ENCODE measurements at regions of chr1 and their contacts with region 1.

Region 1: GRCh38 chr1:1273512-1274298 is at the start of gene UBE2J2:
- DNase-seq: peak; percentile 83 to 92 (median 90)
- ATAC-seq: peak; percentile 99
- H3K4me3 ChIP-seq: peak within 1 kb of the TSS; percentile 77
- H3K4me3 Mint-ChIP-seq: peak within 1 kb of the TSS; percentile 79 to 92 (median 88)
- H3K27ac ChIP-seq: peak within 1 kb of the TSS; percentile 90
- H3K27ac Mint-ChIP-seq: peak within 1 kb of the TSS; percentile 36 to 94 (median 83)
- H3K4me1 ChIP-seq: peaks cover 28 to 39% of the 10 kb centered on the region in 2 donors
- H3K4me1 Mint-ChIP-seq: peaks cover 21 to 45% (median 35%) of the 10 kb centered on the region in 7 donors
- H3K27me3 ChIP-seq: no peaks in the 10 kb centered on the region
- H3K27me3 Mint-ChIP-seq: no peaks in the 10 kb centered on the region
- total RNA-seq, gene UBE2J2: 62.3 to 89.3 (median 75.1) TPM

Region 2: DNA sequence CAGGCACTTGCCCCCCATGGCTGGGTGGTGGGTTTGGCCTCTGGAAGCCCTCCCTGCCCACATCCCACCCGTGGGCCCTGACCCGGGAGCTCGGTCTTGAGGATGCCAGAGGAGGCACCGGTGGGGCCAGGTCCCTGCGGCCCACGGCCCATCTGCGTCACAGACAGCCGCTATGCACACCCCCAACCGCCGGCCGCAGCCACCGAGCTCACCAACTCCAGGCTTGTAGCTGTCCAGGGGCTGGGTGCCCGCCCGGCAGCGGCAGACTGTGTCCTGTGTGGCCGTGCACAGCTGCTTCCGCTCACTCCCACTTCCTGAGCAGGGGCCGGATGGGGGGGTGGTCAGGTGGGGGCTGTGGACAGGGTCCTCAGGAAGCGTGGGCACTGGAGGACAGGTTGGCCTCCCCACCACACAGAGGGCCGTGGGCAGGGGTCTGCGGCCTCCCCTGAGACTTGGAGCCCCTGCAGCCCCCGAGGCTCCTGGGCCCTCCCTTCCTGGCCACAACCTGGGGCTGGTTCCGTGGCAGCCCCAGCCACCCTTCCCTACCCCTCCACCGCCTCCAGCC is 60.8 kb before region 1 on chr1:
- CTCF ChIA-PET with region 1: no interaction called
- POLR2A ChIA-PET with region 1: no interaction called
- intact Hi-C with region 1: loop called in 1 of 2 experiments (anchors 5 kb)
- DNase-seq: peak in 2 of 9 donors; percentile 11 to 71
- ATAC-seq: peak; percentile 50
- H3K4me3 ChIP-seq: peak overlapping the region; percentile 43
- H3K4me3 Mint-ChIP-seq: peak overlapping the region in 4 of 10 donors; percentile 23 to 78 (median 69)
- H3K27ac ChIP-seq: peak overlapping the region; percentile 50
- H3K27ac Mint-ChIP-seq: peak overlapping the region in 1 of 9 donors; percentile 62
- H3K4me1 ChIP-seq: peaks cover 17 to 27% of the 10 kb centered on the region in 2 donors
- H3K4me1 Mint-ChIP-seq: peaks cover 6 to 44% (median 29%) of the 10 kb centered on the region in 7 donors
- H3K27me3 ChIP-seq: no peaks in the 10 kb centered on the region
- H3K27me3 Mint-ChIP-seq: no peaks in the 10 kb centered on the region

Region 3: DNA sequence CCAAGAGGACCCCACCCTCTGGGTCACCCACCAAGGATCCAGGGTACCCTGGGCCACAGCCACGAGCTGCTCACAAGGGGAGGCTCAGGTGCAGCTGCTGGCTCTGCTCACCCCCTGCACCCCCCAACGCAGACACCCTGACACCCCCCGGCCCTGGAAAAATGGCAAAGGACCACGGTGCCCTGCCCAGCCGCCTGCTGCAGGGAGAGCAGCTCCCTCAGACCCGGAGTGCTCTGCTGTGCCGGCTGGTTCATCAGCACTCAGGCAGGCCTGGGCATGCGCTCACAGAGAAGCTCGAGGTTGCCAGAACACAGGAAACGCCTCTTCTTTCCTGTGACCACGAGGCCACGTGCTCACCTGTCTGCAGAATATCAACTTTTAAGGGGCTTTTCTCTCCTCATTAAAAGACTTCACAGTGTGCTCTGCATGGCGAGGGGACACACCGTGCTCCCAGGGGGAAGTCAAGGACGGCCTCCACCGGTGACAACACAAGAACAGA is 22.9 kb before region 1 on chr1:
- CTCF ChIA-PET with region 1: no interaction called
- POLR2A ChIA-PET with region 1: interaction called, 5 read pairs
- intact Hi-C with region 1: loop called in 1 of 2 experiments (anchors 2 kb)
- DNase-seq: peak in 8 of 9 donors; percentile 39 to 79 (median 67)
- ATAC-seq: peak; percentile 95
- H3K4me3 ChIP-seq: peak overlapping the region; percentile 14
- H3K4me3 Mint-ChIP-seq: peak overlapping the region; percentile 33 to 82 (median 74)
- H3K27ac ChIP-seq: peak overlapping the region; percentile 69
- H3K27ac Mint-ChIP-seq: peak overlapping the region; percentile 40 to 96 (median 91)
- H3K4me1 ChIP-seq: peaks cover 10 to 12% of the 10 kb centered on the region in 2 donors
- H3K4me1 Mint-ChIP-seq: peaks cover 4 to 29% (median 11%) of the 10 kb centered on the region in 7 donors
- H3K27me3 ChIP-seq: no peaks in the 10 kb centered on the region
- H3K27me3 Mint-ChIP-seq: peaks cover 0 to 3% (median 0%) of the 10 kb centered on the region in 5 donors

Region 4: GRCh38 chr1:1324521-1325287 is 51.0 kb after region 1 on chr1 and contains the starts of genes CPTP and INTS11:
- CTCF ChIA-PET with region 1: no interaction called
- POLR2A ChIA-PET with region 1: interaction called, 4 read pairs
- intact Hi-C with region 1: loop called in 1 of 2 experiments (anchors 2 kb)
- DNase-seq: peak; percentile 93 to 97 (median 95)
- ATAC-seq: peak; percentile 93
- H3K4me3 ChIP-seq: peak within 1 kb of the TSS; percentile 77
- H3K4me3 Mint-ChIP-seq: peak within 1 kb of the TSS; percentile 83 to 96 (median 90)
- H3K27ac ChIP-seq: peak within 1 kb of the TSS; percentile 92
- H3K27ac Mint-ChIP-seq: peak within 1 kb of the TSS; percentile 67 to 94 (median 91)
- H3K4me1 ChIP-seq: peaks cover 18 to 34% of the 10 kb centered on the region in 2 donors
- H3K4me1 Mint-ChIP-seq: peaks cover 12 to 53% (median 31%) of the 10 kb centered on the region in 7 donors
- H3K27me3 ChIP-seq: no peaks in the 10 kb centered on the region
- H3K27me3 Mint-ChIP-seq: no peaks in the 10 kb centered on the region
- total RNA-seq, gene CPTP: 11.5 to 29.3 (median 19.1) TPM
- total RNA-seq, gene INTS11: 126 to 187 (median 161) TPM

Measured in naive thymus-derived CD4-positive, alpha-beta T cell (primary cell).